ENCODE measurements at regions of chr9 and their contacts with region 1.

Region 1: DNA sequence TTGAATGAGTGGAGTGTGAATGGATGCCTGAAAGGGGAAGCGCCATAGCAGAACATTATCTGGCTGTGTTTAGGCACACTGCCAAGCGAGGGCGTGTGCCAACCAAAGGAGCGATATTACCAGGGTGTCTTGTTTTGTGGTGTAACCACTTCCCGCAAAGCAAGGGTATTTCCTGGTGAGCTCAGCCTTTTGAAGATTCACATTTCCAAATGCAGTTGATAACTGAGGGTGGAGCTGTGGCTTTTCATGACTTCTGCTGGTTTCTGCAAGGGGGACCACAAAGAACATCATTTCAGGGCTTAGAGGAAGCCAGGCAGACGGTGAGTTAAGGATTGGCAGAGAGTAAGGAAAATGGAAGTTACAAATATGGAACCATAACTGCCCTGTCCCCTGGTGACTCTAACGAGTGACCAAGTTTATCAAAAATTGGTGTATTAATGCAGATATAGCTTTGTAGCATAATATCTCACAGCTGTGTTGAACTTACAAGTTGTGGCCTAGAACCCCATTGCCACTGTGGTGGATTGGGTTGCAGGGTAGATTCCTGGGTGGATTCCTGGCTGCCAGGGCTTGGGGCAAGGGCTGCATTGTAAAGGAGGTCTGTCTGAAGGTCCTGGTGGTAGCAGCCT is 71.4 kb downstream of the RALGPS1 start:
- DNase-seq: peak; percentile 91
- H3K4me3 Mint-ChIP-seq: peak overlapping the region; percentile 29
- H3K27ac Mint-ChIP-seq: peak overlapping the region; percentile 87
- H3K4me1 Mint-ChIP-seq: peaks cover 64% of the 10 kb centered on the region
- H3K27me3 Mint-ChIP-seq: peaks cover 36% of the 10 kb centered on the region

Region 2: GRCh38 chr9:126965541-126966428 is 20.2 kb before region 1 on chr9:
- CTCF ChIA-PET with region 1: interaction called, 19 read pairs
- POLR2A ChIA-PET with region 1: interaction called, 4 read pairs
- DNase-seq: peak; percentile 66
- H3K4me3 Mint-ChIP-seq: no peak overlapping the region
- H3K27ac Mint-ChIP-seq: no peak overlapping the region
- H3K4me1 Mint-ChIP-seq: peaks cover 9% of the 10 kb centered on the region
- H3K27me3 Mint-ChIP-seq: peaks cover 8% of the 10 kb centered on the region

Region 3: GRCh38 chr9:127004946-127005769 is 19.2 kb after region 1 on chr9:
- CTCF ChIA-PET with region 1: interaction called, 16 read pairs
- POLR2A ChIA-PET with region 1: interaction called, 23 read pairs
- DNase-seq: peak; percentile 79
- H3K4me3 Mint-ChIP-seq: no peak overlapping the region
- H3K27ac Mint-ChIP-seq: peak overlapping the region; percentile 74
- H3K4me1 Mint-ChIP-seq: peaks cover 31% of the 10 kb centered on the region
- H3K27me3 Mint-ChIP-seq: peaks cover 17% of the 10 kb centered on the region

Region 4: DNA sequence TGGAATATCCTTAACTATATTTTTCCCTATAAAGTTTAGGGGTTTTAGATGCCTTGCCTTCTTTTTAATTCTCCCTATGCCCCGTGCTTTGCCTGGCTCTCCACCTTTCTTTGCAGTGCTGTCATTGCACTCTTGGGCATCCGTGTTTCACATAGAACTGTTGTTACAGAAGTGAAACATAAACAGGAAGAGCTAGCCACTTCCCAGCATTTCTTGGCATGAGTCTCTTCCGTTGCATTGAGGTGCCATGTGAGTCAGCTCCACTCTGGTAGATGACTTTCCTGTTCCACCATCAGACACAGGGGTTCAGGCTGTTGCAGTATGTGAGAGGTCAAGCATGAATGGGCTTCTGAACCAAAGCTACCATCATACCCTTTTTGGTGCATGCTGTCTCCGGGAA is 63.1 kb after region 1 on chr9:
- CTCF ChIA-PET with region 1: interaction called, 25 read pairs
- POLR2A ChIA-PET with region 1: interaction called, 12 read pairs
- DNase-seq: peak; percentile 66
- H3K4me3 Mint-ChIP-seq: peak overlapping the region; percentile 55
- H3K27ac Mint-ChIP-seq: peak overlapping the region; percentile 63
- H3K4me1 Mint-ChIP-seq: peaks cover 42% of the 10 kb centered on the region
- H3K27me3 Mint-ChIP-seq: peaks cover 6% of the 10 kb centered on the region

Region 5: GRCh38 chr9:127154390-127155191 is 168.6 kb after region 1 on chr9:
- CTCF ChIA-PET with region 1: no interaction called
- POLR2A ChIA-PET with region 1: interaction called, 11 read pairs
- DNase-seq: peak; percentile 47
- H3K4me3 Mint-ChIP-seq: no peak overlapping the region
- H3K27ac Mint-ChIP-seq: peak overlapping the region; percentile 51
- H3K4me1 Mint-ChIP-seq: peaks cover 26% of the 10 kb centered on the region
- H3K27me3 Mint-ChIP-seq: peaks cover 21% of the 10 kb centered on the region